ENCODE measurements at regions of chr7 and their contacts with region 1.

Region 1: GRCh38 chr7:139645572-139646523 is 122.4 kb downstream of the CLEC2L start:
- DNase-seq: peak; percentile 69
- H3K4me3 Mint-ChIP-seq: no peak overlapping the region
- H3K27ac Mint-ChIP-seq: no peak overlapping the region
- H3K4me1 Mint-ChIP-seq: peaks cover 44% of the 10 kb centered on the region
- H3K27me3 Mint-ChIP-seq: no peaks in the 10 kb centered on the region

Region 2: GRCh38 chr7:139673230-139673629 is 27.4 kb after region 1 on chr7:
- intact Hi-C with region 1: loop called (anchors 1 kb)
- DNase-seq: no peak
- H3K4me3 Mint-ChIP-seq: peak overlapping the region; percentile 6
- H3K27ac Mint-ChIP-seq: peak overlapping the region; percentile 73
- H3K4me1 Mint-ChIP-seq: peaks cover 45% of the 10 kb centered on the region
- H3K27me3 Mint-ChIP-seq: no peaks in the 10 kb centered on the region

Region 3: DNA sequence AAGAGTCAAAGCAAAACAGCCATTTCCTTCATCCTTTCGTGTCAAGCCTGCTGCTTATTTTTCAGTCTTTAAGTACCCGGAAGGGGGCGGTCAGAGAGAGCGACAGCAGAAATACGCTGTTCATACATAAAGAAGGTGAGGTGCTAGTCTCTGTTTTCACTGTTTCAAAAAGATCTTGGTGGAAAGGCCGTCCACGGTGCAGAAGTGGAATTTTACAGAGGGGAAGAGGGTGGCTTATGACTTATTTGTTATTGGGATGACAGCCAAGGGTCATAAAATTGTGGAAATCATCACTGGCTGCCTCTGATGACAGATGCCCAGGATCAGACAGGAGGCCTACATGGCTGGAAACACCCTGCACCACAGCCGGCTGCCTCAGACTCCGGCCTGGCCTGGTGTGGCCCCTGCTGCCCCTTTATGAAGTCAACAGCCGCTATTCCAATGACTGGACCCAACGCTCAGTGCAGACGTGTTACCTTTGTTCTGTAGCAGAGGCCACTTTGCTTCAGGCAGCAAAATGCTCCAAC is 74.9 kb after region 1 on chr7:
- intact Hi-C with region 1: loop called (anchors 5 kb)
- DNase-seq: no peak
- H3K4me3 Mint-ChIP-seq: no peak overlapping the region
- H3K27ac Mint-ChIP-seq: no peak overlapping the region
- H3K4me1 Mint-ChIP-seq: peaks cover 14% of the 10 kb centered on the region
- H3K27me3 Mint-ChIP-seq: no peaks in the 10 kb centered on the region